OCI-LY7 (cell line): ENCODE measurements at regions of chr2 and their contacts with region 1.

Region 1: DNA sequence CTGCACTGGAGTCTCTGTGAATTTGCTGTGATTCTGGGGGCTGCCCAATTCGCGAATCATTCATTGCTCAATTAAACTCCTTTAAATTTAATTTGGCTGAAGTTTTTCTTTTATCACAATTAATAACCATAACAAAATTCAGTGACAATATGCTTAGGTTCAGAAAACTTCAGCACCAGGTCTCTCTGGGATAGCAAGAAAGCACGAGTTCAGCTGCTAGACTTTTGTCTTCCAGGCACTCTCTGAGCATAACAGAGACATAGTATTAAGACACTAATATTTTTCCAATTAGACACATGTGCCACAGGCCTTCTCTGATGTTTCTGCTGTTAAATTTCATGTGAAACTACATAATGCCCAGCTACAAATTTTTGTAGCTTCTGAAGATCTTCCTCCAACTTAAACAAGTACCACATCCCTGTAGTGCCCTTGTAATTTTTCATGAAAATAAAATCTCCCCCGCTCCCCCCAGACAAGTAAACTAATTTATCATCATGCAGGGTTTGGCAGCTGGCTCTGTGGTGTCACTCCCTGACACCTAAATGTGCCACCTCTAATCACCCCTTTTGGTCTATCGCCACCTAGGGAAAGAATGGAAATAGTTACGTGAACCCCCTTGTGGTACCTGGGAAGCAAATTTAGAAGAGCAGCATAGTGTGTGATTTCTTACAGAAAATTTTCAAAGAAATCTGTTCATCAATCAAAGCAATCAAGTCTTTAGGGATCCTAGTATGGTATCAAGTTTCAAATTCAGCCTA is 94.1 kb downstream of the CSRNP3 start:
- DNase-seq: peak; percentile 34
- H3K4me3 ChIP-seq: no peak overlapping the region
- H3K27ac ChIP-seq: no peak overlapping the region
- H3K4me1 ChIP-seq: peaks cover 7% of the 10 kb centered on the region
- CTCF ChIP-seq: peak; percentile 71

Region 2: GRCh38 chr2:165401285-165401852 is 162.3 kb before region 1 on chr2:
- CTCF ChIA-PET with region 1: no interaction called
- POLR2A ChIA-PET with region 1: no interaction called
- intact Hi-C with region 1: loop called (anchors 5 kb)
- DNase-seq: peak; percentile 75
- H3K4me3 ChIP-seq: no peak overlapping the region
- H3K27ac ChIP-seq: no peak overlapping the region
- H3K4me1 ChIP-seq: no peaks in the 10 kb centered on the region
- CTCF ChIP-seq: peak; percentile 92

Region 3: DNA sequence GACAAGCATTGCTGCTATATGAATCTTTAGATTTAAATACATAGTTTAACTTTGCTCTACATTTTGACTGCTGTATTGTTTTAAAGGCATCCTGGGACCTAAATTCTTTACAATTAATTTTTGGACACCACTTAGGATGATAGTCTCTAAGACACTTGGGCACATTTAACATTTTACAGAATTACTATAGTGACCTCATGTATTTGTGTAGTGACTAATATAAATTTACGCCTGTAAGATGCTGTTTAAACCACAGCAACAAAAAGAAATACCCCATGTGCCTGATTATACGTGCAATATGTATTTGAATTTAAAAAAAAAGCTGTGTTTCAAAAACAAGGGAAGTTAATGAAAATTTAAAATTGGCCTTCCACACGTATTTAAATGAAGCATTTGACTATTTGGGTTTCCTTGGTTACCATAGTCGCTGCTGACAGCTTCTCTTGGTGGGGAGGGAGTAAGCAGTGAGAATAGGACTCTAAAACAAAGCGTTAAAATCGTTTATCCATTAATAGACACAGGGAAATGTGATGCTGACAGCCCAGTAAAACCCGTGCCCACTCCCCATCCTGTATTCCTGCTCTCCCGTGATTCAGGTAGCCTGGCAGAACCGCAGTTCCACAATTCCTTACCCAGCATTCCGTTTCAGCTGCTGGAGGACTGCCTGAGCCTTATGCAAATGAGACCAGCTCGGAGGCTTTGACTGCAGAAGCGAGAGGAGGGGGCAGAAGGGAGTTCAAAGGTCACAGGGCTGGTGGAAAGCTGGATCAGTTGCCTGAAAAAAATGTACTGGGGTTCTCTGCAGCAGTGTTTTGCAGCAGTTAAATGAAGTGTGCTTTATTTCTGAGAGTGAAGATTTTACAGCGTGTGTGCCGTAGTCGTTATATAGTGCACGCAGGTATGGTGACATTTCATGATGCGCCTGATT is 10.2 kb after region 1 on chr2:
- CTCF ChIA-PET with region 1: no interaction called
- POLR2A ChIA-PET with region 1: interaction called, 17 read pairs
- intact Hi-C with region 1: no loop called
- DNase-seq: peak; percentile 40
- H3K4me3 ChIP-seq: peak overlapping the region; percentile 59
- H3K27ac ChIP-seq: peak overlapping the region; percentile 44
- H3K4me1 ChIP-seq: peaks cover 7% of the 10 kb centered on the region
- CTCF ChIP-seq: no peak